ENCODE measurements at regions of chr11 and their contacts with region 1.

Region 1: GRCh38 chr11:66408488-66409214 is 12.2 kb upstream of the NPAS4 start:
- DNase-seq: peak; percentile 73

Region 2: GRCh38 chr11:66242095-66242765 is 166.4 kb before region 1 on chr11:
- in situ Hi-C with region 1: no loop called
- DNase-seq: no peak

Region 3: DNA sequence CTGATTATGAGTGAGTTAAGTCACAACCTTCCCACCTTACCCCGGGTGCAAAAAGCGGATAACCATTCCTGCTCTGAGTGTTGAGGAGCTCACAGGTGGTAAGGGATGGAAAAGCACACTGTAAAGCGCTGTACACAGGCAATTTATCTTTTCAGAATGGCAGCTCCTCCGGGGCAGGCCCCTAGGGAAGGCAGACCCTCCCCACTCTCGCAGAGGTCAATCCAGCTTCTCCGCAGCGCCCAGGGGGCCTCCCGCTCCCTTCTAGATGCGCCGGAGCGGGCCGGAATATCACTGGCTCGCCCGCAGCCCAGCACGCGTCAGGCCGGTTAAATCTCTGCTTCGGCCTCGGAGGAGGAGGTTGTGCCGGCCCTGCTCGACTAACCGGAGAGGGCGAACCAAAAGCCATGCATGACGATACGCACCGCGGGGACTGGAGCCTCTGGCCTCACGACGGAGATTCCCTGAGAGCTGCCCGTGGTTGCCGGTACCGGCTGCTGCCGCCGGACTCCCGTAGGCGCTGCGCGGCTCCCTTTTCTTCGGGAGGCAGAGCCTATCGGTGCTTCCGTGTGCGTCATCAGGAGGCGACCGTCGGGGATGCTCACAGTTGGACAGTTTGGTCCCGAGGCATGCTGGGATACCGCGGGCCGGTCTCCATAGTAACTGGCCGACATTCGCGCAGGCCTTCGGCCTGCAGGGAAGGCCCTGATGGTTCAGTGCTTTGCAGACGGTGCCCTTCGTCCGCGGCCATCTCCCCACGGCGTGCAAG is 63.9 kb before region 1 on chr11 and contains the start of gene BRMS1:
- in situ Hi-C with region 1: no loop called
- DNase-seq: peak; percentile 95

Region 4: DNA sequence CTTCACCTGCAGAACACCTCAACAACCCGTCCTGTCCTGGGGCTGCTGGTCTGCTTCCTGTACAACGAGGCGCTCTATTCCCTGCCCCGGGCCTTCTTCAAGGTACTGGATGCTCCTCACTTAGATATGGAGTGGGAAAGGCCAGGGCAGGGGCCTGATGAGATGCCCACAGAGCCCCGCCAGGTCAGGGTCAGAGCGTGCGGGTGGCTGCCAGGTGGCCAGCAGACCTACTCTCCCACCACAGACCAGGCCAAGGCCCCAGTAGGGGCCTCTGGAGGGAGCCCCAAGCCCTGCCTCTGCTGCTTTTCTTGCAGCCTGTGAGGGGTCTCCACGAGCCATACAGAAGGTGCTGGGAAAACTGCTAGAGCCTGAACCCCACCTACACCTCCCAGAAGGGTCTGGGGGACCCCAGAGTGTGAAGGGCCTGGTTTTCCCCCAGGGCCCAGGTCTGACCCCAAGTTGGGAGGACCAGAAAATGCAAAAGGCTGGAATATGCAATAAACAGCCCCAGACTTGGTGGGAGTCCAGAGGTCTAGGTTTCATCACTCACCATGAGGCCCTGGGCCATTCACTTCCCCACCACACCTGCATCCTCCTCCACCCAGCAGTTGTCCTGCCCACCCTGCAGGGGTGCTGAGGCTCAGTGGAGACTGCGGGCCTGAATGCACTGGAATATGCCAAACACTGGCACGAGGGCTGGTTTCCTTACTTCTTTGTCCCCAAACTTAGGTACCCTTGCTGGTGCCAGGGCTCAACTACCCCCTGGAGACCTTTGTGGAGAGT is 122.5 kb after region 1 on chr11:
- in situ Hi-C with region 1: no loop called
- DNase-seq: no peak

Region 5: DNA sequence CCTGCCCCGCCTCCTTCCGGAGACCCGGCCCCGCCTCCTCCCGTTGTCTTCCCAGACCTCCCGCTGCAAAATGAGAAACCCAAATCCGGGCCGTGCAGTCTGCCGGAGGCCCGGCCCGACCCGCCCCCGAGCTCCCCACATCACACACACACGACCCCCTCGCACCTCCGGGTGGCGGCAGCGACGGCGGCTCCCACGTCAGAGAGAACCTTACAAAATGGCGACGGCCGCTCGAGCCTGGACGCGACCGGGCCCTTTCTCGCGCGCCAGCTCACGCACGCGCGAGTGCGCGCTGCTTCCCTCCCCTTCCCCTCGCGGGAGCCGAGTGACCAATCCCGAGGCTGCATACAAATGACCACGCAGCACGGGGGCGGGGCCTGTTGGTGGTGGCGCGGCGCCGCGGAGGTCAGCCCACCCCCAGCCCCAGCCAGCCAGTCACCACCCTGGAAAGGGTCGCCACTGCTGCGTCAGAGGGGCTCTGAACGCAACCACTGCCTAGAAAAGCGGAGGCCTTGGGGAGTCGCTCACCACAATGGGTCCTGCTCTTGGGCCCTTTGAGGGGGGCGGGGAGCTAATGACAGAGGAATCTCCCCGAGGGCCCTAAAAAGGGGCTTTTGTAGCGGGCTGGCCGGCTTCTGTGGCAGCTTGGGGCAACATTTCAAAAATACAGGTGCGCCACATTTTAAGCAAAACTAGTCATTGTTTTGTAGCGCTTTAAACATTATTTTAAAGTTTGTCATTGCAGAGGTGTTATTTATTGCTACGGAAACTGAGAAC is 269.1 kb after region 1 on chr11 and contains the start of gene RBM4B:
- in situ Hi-C with region 1: loop called (anchors 25 kb)
- DNase-seq: peak; percentile 93